CD4-positive, alpha-beta memory T cell (primary cell): ENCODE measurements at regions of chr5 and their contacts with region 1.

Region 1: DNA sequence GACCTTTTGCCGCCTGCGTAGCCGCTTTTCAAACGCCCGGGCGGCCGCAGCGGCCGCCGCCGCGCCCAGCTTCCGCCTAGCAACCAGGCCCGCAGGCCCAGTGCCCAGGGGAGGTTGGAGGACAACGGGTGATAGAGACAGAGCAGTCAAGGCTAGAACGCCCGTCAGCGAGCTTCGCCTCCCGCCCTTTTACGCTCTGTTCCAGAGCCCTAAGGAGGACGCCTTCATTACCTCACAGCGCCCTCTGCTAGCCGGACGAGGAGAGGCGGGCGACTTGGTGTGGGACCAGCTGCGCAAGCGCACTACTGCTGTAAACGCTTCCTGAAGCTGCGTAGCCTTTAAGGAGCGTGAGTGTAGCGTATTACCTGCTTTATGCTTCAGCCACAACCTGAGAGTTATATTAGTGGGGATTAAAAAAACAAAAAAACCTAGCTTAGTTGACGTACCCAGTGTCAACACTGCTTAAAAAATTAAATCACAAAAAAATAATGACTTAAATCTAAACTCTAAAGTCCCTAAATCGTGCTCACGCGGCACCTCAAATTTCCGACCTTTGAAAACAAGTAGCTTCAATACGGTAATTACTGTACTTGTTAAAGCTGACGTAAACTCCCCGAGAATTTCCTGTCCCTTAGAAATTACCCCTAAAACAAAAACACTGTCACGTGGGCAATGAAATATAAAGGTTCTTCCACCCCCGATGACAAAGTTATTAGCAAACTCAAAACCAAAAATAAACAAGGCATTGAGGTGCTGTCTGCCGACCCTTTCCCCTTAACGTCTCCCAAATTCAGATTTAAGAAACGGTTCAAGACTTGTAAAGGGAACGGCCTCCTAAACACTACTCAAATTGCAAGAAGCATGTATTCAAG is at the start of gene CEP120:
- DNase-seq: peak; percentile 96 to 99 (median 98)
- H3K4me3 ChIP-seq: peak within 1 kb of the TSS; percentile 71 to 77
- H3K4me3 Mint-ChIP-seq: peak within 1 kb of the TSS in 1 of 8 donors; percentile 33
- H3K27ac ChIP-seq: peak within 1 kb of the TSS; percentile 91
- H3K27ac Mint-ChIP-seq: peak within 1 kb of the TSS in 2 of 7 donors; percentile 99
- H3K4me1 ChIP-seq: peaks cover 37% of the 10 kb centered on the region
- H3K4me1 Mint-ChIP-seq: peaks cover 15 to 23% (median 20%) of the 10 kb centered on the region in 4 donors
- H3K27me3 ChIP-seq: no peaks in the 10 kb centered on the region
- H3K27me3 Mint-ChIP-seq: no peaks in the 10 kb centered on the region
- total RNA-seq, gene CEP120: 70.0 to 70.1 TPM

Region 2: GRCh38 chr5:122774861-122775549 is 648.5 kb before region 1 on chr5 and contains the start of gene SNX2:
- CTCF ChIA-PET with region 1: interaction called, 8 read pairs
- POLR2A ChIA-PET with region 1: interaction called, 24 read pairs
- intact Hi-C with region 1: loop called (anchors 1 kb)
- DNase-seq: peak; percentile 85 to 89 (median 88)
- H3K4me3 ChIP-seq: peak within 1 kb of the TSS; percentile 71 to 89
- H3K4me3 Mint-ChIP-seq: peak within 1 kb of the TSS; percentile 95 to 99 (median 96)
- H3K27ac ChIP-seq: peak within 1 kb of the TSS; percentile 72
- H3K27ac Mint-ChIP-seq: peak within 1 kb of the TSS; percentile 94 to 97 (median 96)
- H3K4me1 ChIP-seq: peaks cover 39% of the 10 kb centered on the region
- H3K4me1 Mint-ChIP-seq: peaks cover 31 to 53% (median 43%) of the 10 kb centered on the region in 4 donors
- H3K27me3 ChIP-seq: no peaks in the 10 kb centered on the region
- H3K27me3 Mint-ChIP-seq: peaks cover 0 to 3% of the 10 kb centered on the region in 2 donors
- total RNA-seq, gene SNX2: 57.3 to 58.1 TPM

Region 3: DNA sequence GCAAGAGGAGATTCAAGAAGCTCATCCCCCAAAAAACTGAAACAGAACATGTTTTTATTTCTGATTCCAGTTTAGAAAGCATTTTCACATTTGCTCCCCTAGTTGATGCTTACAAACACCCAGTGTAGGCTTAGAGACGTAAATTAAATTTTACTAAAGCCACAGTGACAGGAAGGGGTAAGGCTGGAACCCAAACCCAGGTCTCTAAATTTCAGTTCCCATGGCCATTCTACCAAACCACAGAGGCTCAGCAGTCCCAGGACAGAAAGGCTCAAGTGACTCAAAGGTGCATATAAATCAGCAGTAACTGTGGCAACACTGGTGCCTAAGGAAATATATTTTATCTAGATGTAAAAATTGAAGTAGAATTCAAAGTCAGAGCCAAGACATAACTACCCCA is 129.0 kb before region 1 on chr5:
- CTCF ChIA-PET with region 1: no interaction called
- POLR2A ChIA-PET with region 1: no interaction called
- intact Hi-C with region 1: no loop called
- DNase-seq: no peak
- H3K4me3 ChIP-seq: no peak overlapping the region
- H3K4me3 Mint-ChIP-seq: no peak overlapping the region
- H3K27ac ChIP-seq: no peak overlapping the region
- H3K27ac Mint-ChIP-seq: no peak overlapping the region
- H3K4me1 ChIP-seq: no peaks in the 10 kb centered on the region
- H3K4me1 Mint-ChIP-seq: no peaks in the 10 kb centered on the region
- H3K27me3 ChIP-seq: no peaks in the 10 kb centered on the region
- H3K27me3 Mint-ChIP-seq: peaks cover 6 to 12% of the 10 kb centered on the region in 2 donors

Region 4: GRCh38 chr5:123412206-123412605 is 11.3 kb before region 1 on chr5:
- CTCF ChIA-PET with region 1: interaction called, 12 read pairs
- POLR2A ChIA-PET with region 1: interaction called, 12 read pairs
- intact Hi-C with region 1: no loop called
- DNase-seq: no peak
- H3K4me3 ChIP-seq: no peak overlapping the region
- H3K4me3 Mint-ChIP-seq: no peak overlapping the region
- H3K27ac ChIP-seq: no peak overlapping the region
- H3K27ac Mint-ChIP-seq: no peak overlapping the region
- H3K4me1 ChIP-seq: peaks cover 17% of the 10 kb centered on the region
- H3K4me1 Mint-ChIP-seq: peaks cover 34 to 51% (median 45%) of the 10 kb centered on the region in 4 donors
- H3K27me3 ChIP-seq: no peaks in the 10 kb centered on the region
- H3K27me3 Mint-ChIP-seq: no peaks in the 10 kb centered on the region

Region 5: DNA sequence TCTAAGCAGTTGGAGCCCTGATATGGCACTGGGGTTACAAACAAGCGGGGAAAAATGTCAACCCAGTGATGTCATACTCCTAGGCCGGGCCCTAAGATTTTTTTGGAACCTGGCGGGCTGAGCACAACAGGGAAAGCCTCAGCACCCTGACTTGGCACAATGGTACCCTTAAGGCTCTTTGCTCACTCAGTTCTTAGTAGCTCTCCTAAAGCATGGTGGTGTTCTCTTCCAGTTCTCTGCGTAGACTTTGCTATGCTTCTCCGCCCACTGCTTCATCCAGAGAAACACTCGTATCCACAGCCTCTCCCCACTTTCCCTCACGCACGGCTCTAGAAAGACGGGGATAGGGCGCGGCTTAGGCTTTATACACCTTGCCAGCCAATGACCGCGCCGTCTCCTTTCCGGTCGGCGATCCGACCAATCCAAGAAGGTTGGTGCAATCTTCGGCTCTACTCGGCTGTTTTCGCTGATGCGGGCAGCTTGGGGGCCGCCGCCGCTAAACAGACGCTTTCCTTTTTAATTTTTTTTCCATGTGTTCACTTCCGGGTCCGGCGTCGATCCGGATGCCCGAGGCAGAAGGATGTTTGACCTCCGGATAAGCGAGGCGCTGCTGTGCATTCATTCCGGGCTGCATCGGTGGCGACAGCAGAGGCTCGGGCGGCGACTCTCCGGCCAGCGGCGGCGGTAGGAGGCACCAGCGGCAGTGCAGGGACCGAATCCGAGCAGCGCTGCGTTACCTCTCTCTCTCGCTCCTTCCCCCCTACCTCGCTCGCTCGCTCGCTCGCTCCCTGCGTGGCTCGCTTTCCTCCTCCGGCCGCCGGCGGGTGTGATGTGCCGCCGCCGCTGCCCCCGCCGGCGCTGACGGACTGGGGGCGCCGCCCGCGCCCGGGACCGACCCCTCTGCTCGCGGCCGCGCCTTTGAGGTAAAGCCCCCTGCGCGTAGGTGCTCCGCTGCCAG is 88.4 kb after region 1 on chr5 and contains the start of gene CSNK1G3:
- CTCF ChIA-PET with region 1: interaction called, 21 read pairs
- POLR2A ChIA-PET with region 1: interaction called, 181 read pairs
- intact Hi-C with region 1: loop called (anchors 1 kb)
- DNase-seq: peak; percentile 91 to 95 (median 92)
- H3K4me3 ChIP-seq: peak within 1 kb of the TSS; percentile 57 to 75
- H3K4me3 Mint-ChIP-seq: peak within 1 kb of the TSS; percentile 94 to 99 (median 98)
- H3K27ac ChIP-seq: peak within 1 kb of the TSS; percentile 71
- H3K27ac Mint-ChIP-seq: peak within 1 kb of the TSS; percentile 95 to 99 (median 98)
- H3K4me1 ChIP-seq: peaks cover 44% of the 10 kb centered on the region
- H3K4me1 Mint-ChIP-seq: peaks cover 25 to 53% (median 35%) of the 10 kb centered on the region in 4 donors
- H3K27me3 ChIP-seq: no peaks in the 10 kb centered on the region
- H3K27me3 Mint-ChIP-seq: no peaks in the 10 kb centered on the region
- total RNA-seq, gene CSNK1G3: 86.5 to 93.0 TPM

Region 6: GRCh38 chr5:123545506-123545905 is 122.0 kb after region 1 on chr5:
- CTCF ChIA-PET with region 1: interaction called, 15 read pairs
- POLR2A ChIA-PET with region 1: interaction called, 71 read pairs
- intact Hi-C with region 1: loop called (anchors 1 kb)
- DNase-seq: peak in 4 of 5 donors; percentile 10 to 41 (median 22)
- H3K4me3 ChIP-seq: no peak overlapping the region
- H3K4me3 Mint-ChIP-seq: no peak overlapping the region
- H3K27ac ChIP-seq: no peak overlapping the region
- H3K27ac Mint-ChIP-seq: peak overlapping the region in 3 of 7 donors; percentile 8 to 58 (median 32)
- H3K4me1 ChIP-seq: peaks cover 39% of the 10 kb centered on the region
- H3K4me1 Mint-ChIP-seq: peaks cover 39 to 66% (median 52%) of the 10 kb centered on the region in 4 donors
- H3K27me3 ChIP-seq: no peaks in the 10 kb centered on the region
- H3K27me3 Mint-ChIP-seq: no peaks in the 10 kb centered on the region

Region 7: GRCh38 chr5:123937230-123937629 is 513.7 kb after region 1 on chr5:
- CTCF ChIA-PET with region 1: no interaction called
- POLR2A ChIA-PET with region 1: no interaction called
- intact Hi-C with region 1: no loop called
- DNase-seq: no peak
- H3K4me3 ChIP-seq: no peak overlapping the region
- H3K4me3 Mint-ChIP-seq: no peak overlapping the region
- H3K27ac ChIP-seq: no peak overlapping the region
- H3K27ac Mint-ChIP-seq: no peak overlapping the region
- H3K4me1 ChIP-seq: no peaks in the 10 kb centered on the region
- H3K4me1 Mint-ChIP-seq: no peaks in the 10 kb centered on the region
- H3K27me3 ChIP-seq: no peaks in the 10 kb centered on the region
- H3K27me3 Mint-ChIP-seq: no peaks in the 10 kb centered on the region